ENCODE measurements at regions of chr3 and their contacts with region 1.

Region 1: GRCh38 chr3:43286115-43286840 is at the start of gene SNRK:
- DNase-seq: peak; percentile 94
- ATAC-seq: peak; percentile 95
- total RNA-seq, gene SNRK: 18.9 TPM

Region 2: GRCh38 chr3:43162230-43163084 is 123.8 kb before region 1 on chr3:
- intact Hi-C with region 1: loop called (anchors 5 kb)
- DNase-seq: no peak
- ATAC-seq: no peak

Region 3: GRCh38 chr3:43246976-43247375 is 39.3 kb before region 1 on chr3:
- intact Hi-C with region 1: loop called (anchors 1 kb)
- DNase-seq: no peak
- ATAC-seq: no peak

Region 4: DNA sequence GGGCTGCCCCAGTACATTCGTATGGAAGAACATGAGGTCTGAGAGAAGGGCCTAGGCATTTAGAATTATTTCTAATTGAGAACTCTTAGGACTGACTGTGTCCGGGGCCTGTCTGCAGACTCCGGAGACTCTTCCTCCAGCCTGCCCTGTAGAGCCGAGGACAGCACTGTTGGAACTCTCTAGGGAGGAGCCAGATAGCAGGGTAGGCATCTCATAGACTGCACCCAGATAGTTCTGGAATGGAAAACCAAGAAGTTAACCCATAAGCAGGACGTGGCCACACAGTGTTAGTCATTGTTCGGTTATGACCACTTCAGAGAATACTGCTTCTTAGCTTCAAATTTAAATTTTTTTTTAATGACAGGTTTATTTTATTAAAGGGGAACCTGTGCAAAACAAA is 59.6 kb after region 1 on chr3:
- intact Hi-C with region 1: loop called (anchors 5 kb)
- DNase-seq: no peak
- ATAC-seq: no peak

Region 5: GRCh38 chr3:43503067-43503728 is 216.9 kb after region 1 on chr3:
- intact Hi-C with region 1: loop called (anchors 2 kb)
- DNase-seq: no peak
- ATAC-seq: no peak